ENCODE measurements at regions of chr18 and their contacts with region 1.

Region 1: DNA sequence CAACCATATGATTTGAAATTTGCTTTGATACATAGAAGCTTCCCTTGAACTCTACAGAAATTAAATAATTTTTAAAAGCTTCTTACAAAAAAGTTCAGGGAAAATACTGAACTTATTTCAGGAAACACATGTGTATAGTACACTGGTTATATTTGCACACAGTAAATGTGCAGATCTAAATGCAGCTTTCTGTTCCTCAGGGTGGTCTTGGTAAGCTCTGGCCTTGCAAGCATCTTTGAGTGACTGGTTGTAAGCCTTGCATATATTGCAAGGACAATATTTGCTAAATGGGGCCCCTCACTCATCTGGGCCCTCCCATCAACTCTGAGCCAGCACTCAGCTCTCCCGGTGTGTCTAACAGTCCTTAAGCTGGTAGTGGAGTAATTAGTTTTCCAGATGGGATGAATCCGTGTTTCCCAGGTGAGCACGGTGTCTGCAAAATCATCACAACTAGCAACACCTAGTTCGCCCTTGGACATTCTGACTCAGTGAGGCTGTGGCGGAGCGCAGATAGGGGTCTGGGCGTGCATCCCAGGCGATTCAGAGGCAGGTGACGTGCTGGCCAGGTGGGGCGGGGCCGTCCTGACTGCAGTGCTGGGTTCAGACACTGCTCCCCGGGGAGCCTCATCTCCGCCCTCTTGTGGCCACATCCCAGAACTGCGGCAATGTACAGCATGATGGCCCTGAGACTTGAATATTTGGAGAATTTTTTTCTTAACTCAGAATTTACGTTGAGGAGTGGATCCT is 149.6 kb downstream of the MBP start:
- DNase-seq: peak; percentile 77 to 84 (median 79)
- H3K4me3 ChIP-seq: peak overlapping the region in 1 of 2 donors; percentile 14
- H3K4me3 Mint-ChIP-seq: peak overlapping the region in 3 of 8 donors; percentile 14 to 34 (median 15)
- H3K27ac ChIP-seq: no peak overlapping the region
- H3K27ac Mint-ChIP-seq: peak overlapping the region in 4 of 7 donors; percentile 7 to 76 (median 21)
- H3K4me1 ChIP-seq: peaks cover 6% of the 10 kb centered on the region
- H3K4me1 Mint-ChIP-seq: peaks cover 4 to 9% (median 6%) of the 10 kb centered on the region in 4 donors
- H3K27me3 ChIP-seq: no peaks in the 10 kb centered on the region
- H3K27me3 Mint-ChIP-seq: no peaks in the 10 kb centered on the region

Region 2: GRCh38 chr18:76528477-76529432 is 454.3 kb before region 1 on chr18:
- CTCF ChIA-PET with region 1: no interaction called
- POLR2A ChIA-PET with region 1: no interaction called
- intact Hi-C with region 1: no loop called
- DNase-seq: no peak
- H3K4me3 ChIP-seq: no peak overlapping the region
- H3K4me3 Mint-ChIP-seq: peak overlapping the region; percentile 22 to 83 (median 46)
- H3K27ac ChIP-seq: no peak overlapping the region
- H3K27ac Mint-ChIP-seq: peak overlapping the region in 1 of 7 donors; percentile 33
- H3K4me1 ChIP-seq: no peaks in the 10 kb centered on the region
- H3K4me1 Mint-ChIP-seq: peaks cover 0 to 9% (median 6%) of the 10 kb centered on the region in 4 donors
- H3K27me3 ChIP-seq: peaks cover 7% of the 10 kb centered on the region
- H3K27me3 Mint-ChIP-seq: peaks cover 10 to 41% of the 10 kb centered on the region in 2 donors

Region 3: GRCh38 chr18:76875390-76876325 is 107.4 kb before region 1 on chr18:
- CTCF ChIA-PET with region 1: interaction called, 5 read pairs
- POLR2A ChIA-PET with region 1: no interaction called
- intact Hi-C with region 1: loop called (anchors 5 kb)
- DNase-seq: peak; percentile 34 to 47 (median 38)
- H3K4me3 ChIP-seq: no peak overlapping the region
- H3K4me3 Mint-ChIP-seq: peak overlapping the region in 2 of 8 donors; percentile 44 to 73
- H3K27ac ChIP-seq: no peak overlapping the region
- H3K27ac Mint-ChIP-seq: peak overlapping the region; percentile 14 to 88 (median 67)
- H3K4me1 ChIP-seq: no peaks in the 10 kb centered on the region
- H3K4me1 Mint-ChIP-seq: peaks cover 7 to 18% (median 11%) of the 10 kb centered on the region in 4 donors
- H3K27me3 ChIP-seq: no peaks in the 10 kb centered on the region
- H3K27me3 Mint-ChIP-seq: no peaks in the 10 kb centered on the region

Region 4: GRCh38 chr18:76922107-76922506 is 60.9 kb before region 1 on chr18:
- CTCF ChIA-PET with region 1: interaction called, 16 read pairs
- POLR2A ChIA-PET with region 1: interaction called, 3 read pairs
- intact Hi-C with region 1: loop called (anchors 1 kb)
- DNase-seq: peak; percentile 43 to 51 (median 47)
- H3K4me3 ChIP-seq: no peak overlapping the region
- H3K4me3 Mint-ChIP-seq: peak overlapping the region in 1 of 8 donors; percentile 47
- H3K27ac ChIP-seq: no peak overlapping the region
- H3K27ac Mint-ChIP-seq: peak overlapping the region in 6 of 7 donors; percentile 8 to 54 (median 33)
- H3K4me1 ChIP-seq: no peaks in the 10 kb centered on the region
- H3K4me1 Mint-ChIP-seq: peaks cover 7 to 21% (median 17%) of the 10 kb centered on the region in 4 donors
- H3K27me3 ChIP-seq: no peaks in the 10 kb centered on the region
- H3K27me3 Mint-ChIP-seq: no peaks in the 10 kb centered on the region

Region 5: DNA sequence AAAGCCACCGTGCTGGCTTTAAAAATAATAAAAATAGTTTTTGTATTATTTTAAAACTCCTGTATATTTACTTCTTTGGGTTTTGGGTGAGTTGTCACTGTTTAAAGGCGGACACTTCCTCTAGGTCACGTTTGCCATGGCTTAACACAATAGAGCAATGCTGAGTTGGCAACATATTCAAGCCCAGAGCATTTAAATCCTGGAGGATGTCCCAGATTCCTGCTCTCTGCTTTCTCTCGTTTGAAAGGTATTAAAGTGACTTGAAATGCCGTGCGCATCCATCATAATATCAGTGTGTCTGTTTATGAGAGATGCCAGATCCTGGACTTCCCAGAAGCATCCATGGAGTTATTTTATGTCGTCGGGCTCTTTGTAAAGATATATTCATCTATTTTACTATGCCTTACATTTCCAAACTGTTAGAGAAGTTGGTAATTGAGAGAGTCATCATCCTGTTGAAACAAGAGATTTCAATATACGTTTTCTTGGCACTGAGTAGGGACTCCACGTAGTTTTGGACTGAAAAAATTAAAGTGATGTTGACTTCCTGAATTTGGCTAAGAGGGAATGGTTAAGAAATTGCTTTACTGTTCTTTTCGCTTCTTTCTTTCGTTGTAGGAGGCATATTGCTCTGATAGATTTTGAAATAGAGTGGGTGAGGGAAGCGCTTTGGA is 10.0 kb before region 1 on chr18:
- CTCF ChIA-PET with region 1: interaction called, 13 read pairs
- POLR2A ChIA-PET with region 1: no interaction called
- intact Hi-C with region 1: no loop called
- DNase-seq: no peak
- H3K4me3 ChIP-seq: no peak overlapping the region
- H3K4me3 Mint-ChIP-seq: no peak overlapping the region
- H3K27ac ChIP-seq: no peak overlapping the region
- H3K27ac Mint-ChIP-seq: peak overlapping the region in 1 of 7 donors; percentile 15
- H3K4me1 ChIP-seq: no peaks in the 10 kb centered on the region
- H3K4me1 Mint-ChIP-seq: peaks cover 0 to 1% (median 0%) of the 10 kb centered on the region in 4 donors
- H3K27me3 ChIP-seq: no peaks in the 10 kb centered on the region
- H3K27me3 Mint-ChIP-seq: no peaks in the 10 kb centered on the region

Region 6: GRCh38 chr18:77044866-77045664 is 62.1 kb after region 1 on chr18:
- CTCF ChIA-PET with region 1: interaction called, 10 read pairs
- POLR2A ChIA-PET with region 1: no interaction called
- intact Hi-C with region 1: no loop called
- DNase-seq: no peak
- H3K4me3 ChIP-seq: no peak overlapping the region
- H3K4me3 Mint-ChIP-seq: peak overlapping the region in 1 of 8 donors; percentile 0
- H3K27ac ChIP-seq: no peak overlapping the region
- H3K27ac Mint-ChIP-seq: peak overlapping the region in 3 of 7 donors; percentile 2 to 46 (median 21)
- H3K4me1 ChIP-seq: peaks cover 8% of the 10 kb centered on the region
- H3K4me1 Mint-ChIP-seq: peaks cover 20 to 56% (median 35%) of the 10 kb centered on the region in 4 donors
- H3K27me3 ChIP-seq: no peaks in the 10 kb centered on the region
- H3K27me3 Mint-ChIP-seq: no peaks in the 10 kb centered on the region

Region 7: DNA sequence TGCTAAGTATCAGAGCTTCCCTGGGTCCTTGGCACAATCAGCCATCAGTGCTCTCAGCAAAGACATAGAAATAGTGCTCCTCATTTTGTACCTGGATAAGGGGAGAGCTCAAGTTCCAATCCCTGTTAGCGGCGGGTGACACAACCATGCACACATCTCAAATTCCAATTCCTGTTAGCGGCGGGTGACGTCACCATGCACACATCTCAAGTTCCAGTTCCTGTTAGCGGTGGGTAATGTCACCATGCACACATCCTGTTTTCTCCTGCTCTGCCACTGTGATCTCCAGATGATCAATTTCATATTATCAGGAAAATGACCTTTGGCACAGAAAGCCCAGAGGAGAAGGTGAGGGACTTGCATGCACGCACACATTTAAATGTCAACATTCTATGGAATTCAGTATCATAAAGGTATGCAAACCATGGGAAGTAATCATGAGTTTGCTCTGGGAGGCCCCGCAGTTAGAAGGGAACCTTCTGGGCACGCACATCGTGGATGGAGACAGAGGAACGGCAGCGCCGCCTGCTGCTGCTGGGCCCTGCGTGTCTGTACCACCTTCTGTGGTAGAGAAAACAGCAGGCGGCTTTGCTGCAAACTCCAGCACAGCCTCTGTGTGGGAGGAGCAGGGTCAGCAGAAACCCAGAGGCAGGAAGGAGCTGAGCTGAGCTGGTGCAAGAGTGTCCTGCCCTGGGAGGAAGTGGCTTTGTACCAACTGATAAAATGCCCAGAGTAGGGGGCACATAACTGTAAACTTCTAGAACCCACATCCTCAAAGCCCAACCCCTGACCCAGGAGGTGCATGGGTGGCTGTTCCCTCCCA is 71.8 kb after region 1 on chr18:
- CTCF ChIA-PET with region 1: interaction called, 15 read pairs
- POLR2A ChIA-PET with region 1: interaction called, 5 read pairs
- intact Hi-C with region 1: no loop called
- DNase-seq: peak; percentile 80 to 88 (median 86)
- H3K4me3 ChIP-seq: peak overlapping the region in 1 of 2 donors; percentile 54
- H3K4me3 Mint-ChIP-seq: peak overlapping the region; percentile 72 to 92 (median 86)
- H3K27ac ChIP-seq: peak overlapping the region; percentile 84
- H3K27ac Mint-ChIP-seq: peak overlapping the region; percentile 93 to 100 (median 97)
- H3K4me1 ChIP-seq: peaks cover 83% of the 10 kb centered on the region
- H3K4me1 Mint-ChIP-seq: peaks cover 56 to 79% (median 68%) of the 10 kb centered on the region in 4 donors
- H3K27me3 ChIP-seq: no peaks in the 10 kb centered on the region
- H3K27me3 Mint-ChIP-seq: no peaks in the 10 kb centered on the region

Region 8: DNA sequence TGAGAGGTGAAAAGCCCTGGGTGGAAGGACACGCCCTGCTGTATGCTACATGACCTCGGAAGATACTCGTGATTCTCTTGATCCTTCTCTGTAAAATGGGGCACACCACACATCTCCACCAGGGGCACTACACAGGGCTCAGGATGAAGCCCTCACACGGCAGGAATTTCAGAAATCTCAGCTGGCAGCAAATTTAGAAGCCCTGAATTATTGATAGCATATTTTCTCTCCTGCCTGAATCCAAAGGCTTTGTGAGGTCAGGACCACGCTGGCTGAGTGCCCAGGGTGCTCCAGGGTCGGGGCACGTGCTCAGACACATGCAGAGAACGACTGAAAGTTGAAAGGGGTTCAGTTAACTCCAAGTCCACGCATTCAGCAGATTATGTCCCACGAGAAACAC is 224.5 kb after region 1 on chr18:
- CTCF ChIA-PET with region 1: interaction called, 30 read pairs
- POLR2A ChIA-PET with region 1: no interaction called
- intact Hi-C with region 1: no loop called
- DNase-seq: peak; percentile 55 to 79 (median 67)
- H3K4me3 ChIP-seq: no peak overlapping the region
- H3K4me3 Mint-ChIP-seq: peak overlapping the region; percentile 60 to 80 (median 72)
- H3K27ac ChIP-seq: no peak overlapping the region
- H3K27ac Mint-ChIP-seq: peak overlapping the region; percentile 41 to 92 (median 85)
- H3K4me1 ChIP-seq: peaks cover 37% of the 10 kb centered on the region
- H3K4me1 Mint-ChIP-seq: peaks cover 29 to 52% (median 41%) of the 10 kb centered on the region in 4 donors
- H3K27me3 ChIP-seq: no peaks in the 10 kb centered on the region
- H3K27me3 Mint-ChIP-seq: peaks cover 0 to 4% of the 10 kb centered on the region in 2 donors

Region 9: GRCh38 chr18:77560341-77560992 is 577.5 kb after region 1 on chr18:
- CTCF ChIA-PET with region 1: no interaction called
- POLR2A ChIA-PET with region 1: no interaction called
- intact Hi-C with region 1: no loop called
- DNase-seq: no peak
- H3K4me3 ChIP-seq: no peak overlapping the region
- H3K4me3 Mint-ChIP-seq: no peak overlapping the region
- H3K27ac ChIP-seq: no peak overlapping the region
- H3K27ac Mint-ChIP-seq: peak overlapping the region in 1 of 7 donors; percentile 23
- H3K4me1 ChIP-seq: no peaks in the 10 kb centered on the region
- H3K4me1 Mint-ChIP-seq: no peaks in the 10 kb centered on the region
- H3K27me3 ChIP-seq: no peaks in the 10 kb centered on the region
- H3K27me3 Mint-ChIP-seq: peaks cover 7 to 8% of the 10 kb centered on the region in 2 donors